ENCODE measurements at regions of chr1 and their contacts with region 1.

Region 1: GRCh38 chr1:179954493-179955297 is at the start of gene CEP350:
- DNase-seq: peak; percentile 98 to 99 (median 99)
- H3K4me3 ChIP-seq: peak within 1 kb of the TSS; percentile 93 to 98 (median 97)
- H3K27ac ChIP-seq: peak within 1 kb of the TSS; percentile 85 to 98 (median 92)
- H3K4me1 ChIP-seq: peaks cover 4 to 41% of the 10 kb centered on the region in 2 donors
- H3K27me3 ChIP-seq: no peaks in the 10 kb centered on the region
- CTCF ChIP-seq: no peak
- POLR2A ChIP-seq: peak; percentile 62 to 90
- total RNA-seq, gene CEP350: 38.1 to 71.4 (median 45.4) TPM

Region 2: GRCh38 chr1:179794669-179795068 is 160.0 kb before region 1 on chr1:
- intact Hi-C with region 1: no loop called
- DNase-seq: peak in 1 of 7 donors; percentile 22
- H3K4me3 ChIP-seq: no peak overlapping the region
- H3K27ac ChIP-seq: no peak overlapping the region
- H3K4me1 ChIP-seq: peaks cover 0 to 4% of the 10 kb centered on the region in 2 donors
- H3K27me3 ChIP-seq: no peaks in the 10 kb centered on the region
- CTCF ChIP-seq: no peak
- POLR2A ChIP-seq: no peak

Region 3: GRCh38 chr1:179882243-179883039 is 72.3 kb before region 1 on chr1 and contains the start of gene TOR1AIP1:
- intact Hi-C with region 1: loop called in 1 of 2 experiments (anchors 10 kb)
- DNase-seq: peak; percentile 97 to 98 (median 98)
- H3K4me3 ChIP-seq: peak within 1 kb of the TSS; percentile 42 to 94 (median 87)
- H3K27ac ChIP-seq: peak within 1 kb of the TSS; percentile 99 to 100 (median 100)
- H3K4me1 ChIP-seq: peaks cover 17 to 52% of the 10 kb centered on the region in 2 donors
- H3K27me3 ChIP-seq: no peaks in the 10 kb centered on the region
- CTCF ChIP-seq: peak; percentile 45 to 84 (median 76)
- POLR2A ChIP-seq: peak; percentile 91 to 98
- total RNA-seq, gene TOR1AIP1: 28.4 to 99.6 (median 60.7) TPM

Region 4: DNA sequence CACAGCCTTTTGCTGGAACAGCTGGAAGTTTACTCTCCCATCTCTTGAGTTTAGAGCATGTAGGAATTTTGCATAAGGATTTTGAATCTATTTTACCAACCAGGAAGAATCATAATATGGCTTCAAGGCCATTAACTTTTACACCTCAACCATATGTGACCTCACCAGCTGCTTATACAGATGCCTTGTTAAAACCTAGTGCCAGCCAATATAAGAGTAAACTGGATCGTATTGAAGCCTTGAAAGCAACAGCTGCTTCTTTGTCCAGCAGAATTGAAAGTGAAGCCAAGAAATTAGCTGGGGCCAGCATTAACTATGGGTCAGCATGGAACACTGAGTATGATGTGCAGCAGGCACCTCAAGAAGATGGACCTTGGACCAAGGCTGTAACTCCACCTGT is 65.3 kb after region 1 on chr1:
- intact Hi-C with region 1: no loop called
- DNase-seq: no peak
- H3K4me3 ChIP-seq: no peak overlapping the region
- H3K27ac ChIP-seq: no peak overlapping the region
- H3K4me1 ChIP-seq: peaks cover 0 to 5% of the 10 kb centered on the region in 2 donors
- H3K27me3 ChIP-seq: no peaks in the 10 kb centered on the region
- CTCF ChIP-seq: no peak
- POLR2A ChIP-seq: no peak

Region 5: GRCh38 chr1:180136331-180136967 is 181.8 kb after region 1 on chr1:
- intact Hi-C with region 1: no loop called
- DNase-seq: no peak
- H3K4me3 ChIP-seq: no peak overlapping the region
- H3K27ac ChIP-seq: no peak overlapping the region
- H3K4me1 ChIP-seq: no peaks in the 10 kb centered on the region
- H3K27me3 ChIP-seq: no peaks in the 10 kb centered on the region
- CTCF ChIP-seq: no peak
- POLR2A ChIP-seq: no peak